Endothelial cell of umbilical vein (primary cell): ENCODE measurements at regions of chr15 and their contacts with region 1.

Region 1: GRCh38 chr15:78469031-78469430 is 31.0 kb downstream of the IREB2 start:
- DNase-seq: no peak
- H3K4me3 ChIP-seq: no peak overlapping the region
- H3K27ac ChIP-seq: no peak overlapping the region
- H3K4me1 ChIP-seq: no peaks in the 10 kb centered on the region
- H3K27me3 ChIP-seq: no peaks in the 10 kb centered on the region
- CTCF ChIP-seq: no peak
- POLR2A ChIP-seq: no peak

Region 2: DNA sequence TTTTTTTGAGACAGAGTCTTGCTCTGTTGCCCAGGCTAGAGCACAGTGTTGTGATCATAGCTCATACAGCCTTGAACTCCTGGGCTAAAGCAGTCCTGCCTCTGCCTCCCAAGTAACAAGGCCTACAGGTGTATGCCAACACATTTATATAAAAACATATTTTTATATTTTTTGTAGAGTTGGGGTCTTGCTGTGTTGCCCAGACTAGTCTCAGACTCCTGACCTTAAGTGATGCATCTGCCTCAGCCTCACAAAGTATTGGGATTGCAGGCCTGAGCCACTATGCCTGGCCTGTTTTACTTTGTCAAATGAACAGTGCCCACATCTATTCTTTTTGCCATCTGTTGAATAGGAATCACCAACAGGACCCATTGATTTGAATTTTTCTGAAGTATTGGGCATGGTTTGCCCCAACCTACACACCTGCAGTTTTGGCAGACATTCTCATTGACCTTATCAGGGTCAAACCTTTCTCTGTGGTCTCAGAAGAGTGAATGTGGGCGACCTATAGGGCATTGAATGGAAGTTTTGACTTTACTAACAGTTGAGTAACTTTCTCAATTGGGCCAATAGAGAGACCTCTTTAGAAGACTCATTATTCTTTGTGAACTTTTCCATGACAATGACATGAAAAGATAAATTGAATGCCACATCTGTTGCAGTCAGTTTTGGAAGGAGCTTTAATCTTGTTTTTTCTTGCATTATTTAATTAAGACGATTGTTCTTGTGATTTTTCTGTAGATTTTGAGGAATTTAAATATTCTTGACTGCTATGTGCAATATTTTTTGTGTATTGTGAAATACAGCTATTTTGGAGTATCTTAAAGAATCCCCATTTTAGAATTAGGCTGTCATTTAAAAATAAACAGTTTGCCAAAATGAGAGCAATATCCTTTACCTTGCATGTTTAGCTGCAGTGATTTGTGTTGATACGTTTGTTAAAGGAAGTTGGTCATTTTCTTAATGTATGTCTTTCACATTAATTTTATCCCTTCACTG is 28.4 kb before region 1 on chr15:
- CTCF ChIA-PET with region 1: no interaction called
- POLR2A ChIA-PET with region 1: no interaction called
- dilution Hi-C with region 1: no loop called
- intact Hi-C with region 1: no loop called
- DNase-seq: no peak
- H3K4me3 ChIP-seq: no peak overlapping the region
- H3K27ac ChIP-seq: no peak overlapping the region
- H3K4me1 ChIP-seq: peaks cover 17% of the 10 kb centered on the region
- H3K27me3 ChIP-seq: no peaks in the 10 kb centered on the region
- CTCF ChIP-seq: no peak
- POLR2A ChIP-seq: no peak

Region 3: DNA sequence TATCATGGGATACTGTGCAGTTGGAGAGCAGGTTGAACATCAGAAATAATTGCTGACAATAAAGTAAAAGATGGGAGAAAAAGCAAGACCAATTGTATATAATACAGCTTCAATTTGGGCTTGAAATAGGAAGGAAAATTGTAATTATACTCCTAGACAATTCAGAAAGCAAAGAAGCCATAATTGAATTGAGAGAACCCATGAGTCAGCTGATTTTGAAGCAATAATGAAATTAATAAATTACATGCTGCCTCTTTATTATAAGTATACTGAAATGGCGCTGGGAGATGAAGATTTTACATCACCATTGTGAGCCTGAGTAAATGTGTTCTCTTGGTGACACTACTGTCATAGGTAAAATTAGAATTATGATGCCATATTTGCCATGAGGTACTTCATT is 128.6 kb after region 1 on chr15:
- CTCF ChIA-PET with region 1: no interaction called
- POLR2A ChIA-PET with region 1: interaction called, 10 read pairs
- dilution Hi-C with region 1: no loop called
- intact Hi-C with region 1: no loop called
- DNase-seq: no peak
- H3K4me3 ChIP-seq: no peak overlapping the region
- H3K27ac ChIP-seq: no peak overlapping the region
- H3K4me1 ChIP-seq: no peaks in the 10 kb centered on the region
- H3K27me3 ChIP-seq: no peaks in the 10 kb centered on the region
- CTCF ChIP-seq: no peak
- POLR2A ChIP-seq: no peak